ENCODE measurements at regions of chr3 and their contacts with region 1.

Region 1: GRCh38 chr3:65342084-65342683 is 654.4 kb upstream of the ADAMTS9 start:
- DNase-seq: peak; percentile 73
- H3K4me3 ChIP-seq: no peak overlapping the region
- H3K27ac ChIP-seq: no peak overlapping the region
- H3K4me1 ChIP-seq: no peaks in the 10 kb centered on the region
- H3K27me3 ChIP-seq: no peaks in the 10 kb centered on the region
- CTCF ChIP-seq: peak; percentile 62

Region 2: GRCh38 chr3:65080432-65080831 is 261.8 kb before region 1 on chr3:
- intact Hi-C with region 1: no loop called
- DNase-seq: no peak
- H3K4me3 ChIP-seq: no peak overlapping the region
- H3K27ac ChIP-seq: no peak overlapping the region
- H3K4me1 ChIP-seq: no peaks in the 10 kb centered on the region
- H3K27me3 ChIP-seq: no peaks in the 10 kb centered on the region
- CTCF ChIP-seq: no peak

Region 3: GRCh38 chr3:65412588-65412987 is 70.4 kb after region 1 on chr3:
- intact Hi-C with region 1: loop called (anchors 5 kb)
- DNase-seq: peak; percentile 91
- H3K4me3 ChIP-seq: no peak overlapping the region
- H3K27ac ChIP-seq: peak overlapping the region; percentile 41
- H3K4me1 ChIP-seq: peaks cover 5% of the 10 kb centered on the region
- H3K27me3 ChIP-seq: no peaks in the 10 kb centered on the region
- CTCF ChIP-seq: peak; percentile 32

Region 4: DNA sequence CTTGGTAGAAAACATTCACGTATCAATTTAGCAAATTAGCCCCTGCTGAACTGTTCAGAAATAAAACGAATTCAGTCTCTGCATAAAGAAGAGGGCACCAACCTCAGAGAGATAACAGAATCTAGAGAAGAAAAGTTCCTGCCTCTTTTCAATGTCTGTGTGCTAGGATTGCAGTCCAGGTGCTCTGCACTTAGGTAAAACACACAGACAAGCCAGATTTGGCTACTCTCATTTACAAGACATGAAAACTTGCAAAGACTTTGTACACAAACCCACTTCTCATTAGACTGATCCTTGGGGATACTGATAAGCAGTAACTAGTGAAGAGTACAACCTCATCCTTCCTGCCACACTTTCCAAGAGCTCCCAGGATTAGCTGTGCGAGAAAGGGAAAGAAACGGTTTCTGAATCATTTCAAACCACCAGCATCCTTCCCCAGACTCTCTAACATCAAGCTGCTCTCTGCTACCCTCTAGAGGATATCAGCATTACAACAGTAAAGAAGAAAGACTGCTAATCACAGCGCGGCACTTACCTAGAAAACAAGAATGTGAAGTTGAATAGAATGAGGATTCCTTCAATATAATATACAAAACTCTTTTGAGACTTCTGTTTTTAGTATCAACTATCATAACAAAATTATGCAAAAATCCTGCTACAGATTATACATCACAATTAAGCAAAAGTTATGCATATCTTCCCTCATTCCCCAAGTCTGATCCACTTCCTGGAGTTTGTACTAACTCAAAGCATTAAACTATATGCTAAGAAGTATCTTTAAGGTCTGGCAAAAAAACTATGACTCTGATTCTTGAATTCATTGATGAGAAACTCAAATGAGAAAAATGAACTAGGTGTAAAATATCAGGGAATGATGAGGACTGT is 390.1 kb after region 1 on chr3:
- intact Hi-C with region 1: loop called (anchors 10 kb)
- DNase-seq: peak; percentile 30
- H3K4me3 ChIP-seq: no peak overlapping the region
- H3K27ac ChIP-seq: no peak overlapping the region
- H3K4me1 ChIP-seq: no peaks in the 10 kb centered on the region
- H3K27me3 ChIP-seq: no peaks in the 10 kb centered on the region
- CTCF ChIP-seq: peak; percentile 62

Measured in colonic mucosa (tissue), 4 donors.